Astrocyte of the cerebellum (primary cell): ENCODE measurements at regions of chr2 and their contacts with region 1.

Region 1: GRCh38 chr2:168455648-168456520 is at the start of gene CERS6:
- DNase-seq: peak; percentile 83
- H3K4me3 ChIP-seq: peak within 1 kb of the TSS; percentile 88
- CTCF ChIP-seq: no peak

Region 2: GRCh38 chr2:168536925-168537466 is 81.1 kb after region 1 on chr2:
- in situ Hi-C with region 1: loop called (anchors 5 kb)
- DNase-seq: no peak
- H3K4me3 ChIP-seq: no peak overlapping the region
- CTCF ChIP-seq: no peak

Region 3: DNA sequence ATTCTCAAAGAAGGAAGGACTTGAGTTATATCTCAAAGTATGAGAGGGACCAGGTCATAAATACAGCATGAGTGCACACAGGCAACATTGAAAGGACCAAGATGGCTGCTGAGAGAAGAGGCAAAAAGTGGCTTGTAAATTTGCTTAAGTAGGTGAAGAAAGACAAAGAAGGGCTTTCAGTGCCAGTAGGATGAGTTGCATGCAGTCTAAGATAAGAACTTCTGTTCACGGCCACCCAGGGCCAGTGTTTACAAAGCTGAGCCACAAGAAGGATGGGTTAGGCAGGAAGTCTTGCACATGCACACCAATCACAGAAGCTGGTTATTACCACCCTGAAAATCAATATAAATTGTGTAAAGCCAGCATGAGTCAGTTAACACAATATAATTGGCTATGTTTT is 578.4 kb after region 1 on chr2:
- in situ Hi-C with region 1: no loop called
- DNase-seq: no peak
- H3K4me3 ChIP-seq: no peak overlapping the region
- CTCF ChIP-seq: no peak